IMR-90 (cell line): ENCODE measurements at regions of chr15 and their contacts with region 1.

Region 1: DNA sequence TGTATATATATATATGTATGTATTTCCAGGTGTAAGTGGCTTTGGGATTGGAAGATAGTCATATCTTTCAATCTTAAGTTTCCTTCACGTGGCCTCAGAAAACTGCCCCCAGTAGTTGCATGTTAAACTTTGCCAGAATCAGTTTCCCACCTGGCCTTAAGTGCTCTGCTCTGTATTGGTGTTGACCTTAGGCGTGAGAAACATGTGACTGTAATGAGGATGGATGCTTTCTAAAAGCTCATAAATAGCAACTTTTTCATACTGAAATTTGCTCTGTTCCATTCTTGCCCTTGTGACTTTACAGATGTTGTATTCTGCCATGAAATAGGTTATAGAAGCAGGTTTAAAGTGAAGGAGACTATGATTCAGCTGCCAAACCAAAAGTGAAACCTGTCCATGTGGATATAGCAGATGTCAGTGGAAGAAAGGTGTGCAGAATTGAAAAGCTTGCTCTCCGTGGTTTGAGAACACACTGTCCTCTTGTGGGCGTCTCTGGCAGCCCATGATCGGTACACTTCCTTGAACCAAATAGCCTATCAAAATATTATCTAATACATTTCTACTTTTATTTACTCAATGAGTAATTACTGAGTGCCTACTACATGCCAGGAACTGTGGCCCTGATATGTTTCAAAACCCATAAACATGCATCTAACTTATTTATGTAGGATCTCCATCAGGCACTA is 15.8 kb downstream of the SCG5 start:
- DNase-seq: no peak
- ATAC-seq: no peak
- H3K4me3 ChIP-seq: no peak overlapping the region
- H3K27ac ChIP-seq: no peak overlapping the region
- H3K4me1 ChIP-seq: peaks cover 3% of the 10 kb centered on the region
- H3K27me3 ChIP-seq: no peaks in the 10 kb centered on the region
- CTCF ChIP-seq: no peak
- POLR2A ChIP-seq: no peak
- RAD21 ChIP-seq: no peak

Region 2: DNA sequence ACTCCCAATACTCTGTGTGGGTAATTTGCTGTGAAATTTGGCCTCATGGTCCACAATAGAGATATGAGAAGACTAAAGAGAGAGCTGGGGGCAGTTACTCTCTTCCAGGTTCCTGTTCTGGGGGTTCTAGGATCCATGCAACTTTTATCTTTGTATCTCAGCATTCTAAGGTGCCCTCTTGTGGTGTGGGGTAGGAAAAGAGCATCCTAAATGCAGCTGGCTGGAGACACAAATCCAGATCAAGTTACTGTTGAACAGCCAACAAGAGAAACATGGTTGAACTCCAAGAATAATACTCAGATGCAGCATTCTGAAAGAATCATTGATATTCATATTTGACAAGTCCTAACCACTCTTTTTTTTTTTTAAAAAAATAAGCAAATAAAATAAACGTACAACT is 298.7 kb after region 1 on chr15:
- CTCF ChIA-PET with region 1: interaction called, 8 read pairs
- POLR2A ChIA-PET with region 1: no interaction called
- dilution Hi-C with region 1: no loop called
- in situ Hi-C with region 1: no loop called
- intact Hi-C with region 1: loop called (anchors 1 kb)
- DNase-seq: peak; percentile 95
- ATAC-seq: peak; percentile 73
- H3K4me3 ChIP-seq: no peak overlapping the region
- H3K27ac ChIP-seq: peak overlapping the region; percentile 92; the same call in 1 of the 2 replicates
- H3K4me1 ChIP-seq: peaks cover 37% of the 10 kb centered on the region
- H3K27me3 ChIP-seq: no peaks in the 10 kb centered on the region
- CTCF ChIP-seq: peak; percentile 79
- POLR2A ChIP-seq: no peak
- RAD21 ChIP-seq: peak; percentile 79